ENCODE measurements at regions of chr2 and their contacts with region 1.

Region 1: DNA sequence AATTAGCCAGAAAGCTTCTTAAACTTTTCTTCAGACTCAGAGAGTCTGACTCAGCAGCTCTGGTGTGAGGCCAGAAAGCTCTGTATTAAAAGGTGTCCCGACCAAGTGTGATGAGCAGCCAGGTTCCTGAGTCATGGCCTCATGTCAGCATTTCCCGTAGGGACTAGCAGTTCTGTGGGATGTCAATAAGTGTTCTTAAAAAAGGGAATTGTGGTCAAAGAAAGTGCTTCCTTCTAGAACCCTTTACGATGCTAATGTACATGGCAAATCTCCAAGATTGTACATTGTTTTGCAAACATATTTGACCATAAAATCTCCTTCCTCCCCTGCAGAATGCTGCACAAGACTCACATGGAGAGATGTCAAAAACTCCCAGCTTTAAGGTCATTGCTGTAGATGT is 80.1 kb downstream of the PLA2R1 start:
- DNase-seq: peak; percentile 87
- H3K4me3 ChIP-seq: no peak overlapping the region
- CTCF ChIP-seq: no peak

Region 2: DNA sequence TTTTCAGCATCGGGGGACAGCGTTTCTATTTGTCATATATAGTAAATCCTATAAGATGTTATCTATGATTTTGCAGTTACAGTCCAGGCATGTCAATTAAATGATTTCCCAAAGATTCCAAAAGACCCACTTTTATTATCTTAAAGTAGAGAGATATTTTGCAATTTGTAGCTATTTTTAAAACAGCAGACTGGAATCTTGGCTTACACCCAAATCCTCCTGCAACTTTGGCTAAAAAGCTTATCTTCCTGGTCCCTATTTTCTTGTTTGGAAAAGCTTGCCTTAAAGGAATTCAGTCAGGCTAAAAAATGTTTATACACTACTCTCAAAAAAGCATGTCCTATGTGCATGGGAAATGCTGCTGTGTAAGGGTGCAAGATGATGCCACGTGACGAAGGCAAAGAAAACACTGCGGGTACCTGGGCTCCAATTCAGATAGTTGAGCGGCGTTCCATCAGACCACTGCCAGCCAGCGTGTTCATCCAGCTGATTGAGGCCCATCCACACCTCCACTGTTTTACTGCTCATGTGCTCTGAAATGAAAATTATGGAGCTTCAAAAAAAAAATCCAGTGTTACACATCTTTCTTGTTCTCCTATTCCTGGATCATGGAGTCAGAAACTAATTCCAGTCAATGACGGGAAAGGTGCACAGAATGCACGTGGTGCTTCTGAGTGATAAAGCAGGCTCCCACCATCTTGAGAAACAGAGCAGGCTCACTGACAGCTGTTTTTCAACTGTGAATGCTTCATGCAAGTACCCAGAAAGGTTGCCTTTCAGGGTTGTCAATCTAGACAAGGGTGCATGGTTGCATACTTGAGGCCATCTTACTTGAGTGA is 46.4 kb after region 1 on chr2:
- in situ Hi-C with region 1: loop called (anchors 5 kb)
- DNase-seq: peak; percentile 15
- H3K4me3 ChIP-seq: no peak overlapping the region
- CTCF ChIP-seq: no peak

Measured in astrocyte of the cerebellum (primary cell).